Activated naive CD4-positive, alpha-beta T cell treated with anti-CD3 and anti-CD28 coated beads for 36 hours (primary cell): ENCODE measurements at regions of chr5 and their contacts with region 1.

Region 1: DNA sequence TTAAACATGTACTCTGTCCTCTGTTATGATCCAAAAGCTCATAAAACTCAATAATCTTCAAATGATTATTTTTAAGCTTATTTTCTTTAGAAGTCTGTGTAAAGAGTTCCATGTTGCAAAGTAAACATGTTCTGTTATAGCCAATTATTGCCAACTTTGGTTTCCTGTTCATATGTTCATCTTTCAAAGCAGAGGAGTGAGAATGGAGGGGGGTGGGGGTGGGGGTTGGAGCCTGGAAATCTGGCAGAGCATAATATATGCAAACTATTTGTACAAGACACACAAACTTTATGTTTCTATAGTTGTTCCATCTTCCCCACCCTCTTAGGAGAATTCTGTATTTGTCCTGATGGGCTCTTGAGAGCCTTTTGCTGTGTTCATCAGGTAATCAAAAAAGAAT is 135.0 kb downstream of the STARD4 start:
- DNase-seq: no peak
- H3K4me3 Mint-ChIP-seq: no peak overlapping the region
- H3K27ac Mint-ChIP-seq: no peak overlapping the region
- H3K4me1 Mint-ChIP-seq: peaks cover 39% of the 10 kb centered on the region
- H3K27me3 Mint-ChIP-seq: no peaks in the 10 kb centered on the region

Region 2: DNA sequence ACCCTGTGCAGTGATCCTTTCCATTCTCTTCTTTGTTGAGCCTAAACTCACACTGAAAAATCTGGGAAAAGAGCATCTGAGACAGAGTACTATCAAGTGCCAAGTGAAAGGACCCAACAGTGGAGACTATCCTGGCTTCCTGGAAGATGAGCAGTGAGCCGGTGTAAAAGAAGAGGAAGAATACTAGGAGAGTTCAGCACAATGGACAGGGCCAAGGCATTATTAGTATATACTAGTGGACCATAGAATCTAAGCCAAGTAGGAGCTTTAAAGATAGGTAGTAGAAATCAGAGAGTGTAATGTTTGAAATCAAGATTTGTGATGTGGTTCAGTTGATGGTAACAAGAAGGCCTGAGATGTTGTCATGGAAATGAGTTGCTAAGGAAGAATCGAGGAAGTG is 12.3 kb before region 1 on chr5:
- CTCF ChIA-PET with region 1: no interaction called
- intact Hi-C with region 1: no loop called
- DNase-seq: no peak
- H3K4me3 Mint-ChIP-seq: no peak overlapping the region
- H3K27ac Mint-ChIP-seq: no peak overlapping the region
- H3K4me1 Mint-ChIP-seq: peaks cover 42% of the 10 kb centered on the region
- H3K27me3 Mint-ChIP-seq: no peaks in the 10 kb centered on the region

Region 3: DNA sequence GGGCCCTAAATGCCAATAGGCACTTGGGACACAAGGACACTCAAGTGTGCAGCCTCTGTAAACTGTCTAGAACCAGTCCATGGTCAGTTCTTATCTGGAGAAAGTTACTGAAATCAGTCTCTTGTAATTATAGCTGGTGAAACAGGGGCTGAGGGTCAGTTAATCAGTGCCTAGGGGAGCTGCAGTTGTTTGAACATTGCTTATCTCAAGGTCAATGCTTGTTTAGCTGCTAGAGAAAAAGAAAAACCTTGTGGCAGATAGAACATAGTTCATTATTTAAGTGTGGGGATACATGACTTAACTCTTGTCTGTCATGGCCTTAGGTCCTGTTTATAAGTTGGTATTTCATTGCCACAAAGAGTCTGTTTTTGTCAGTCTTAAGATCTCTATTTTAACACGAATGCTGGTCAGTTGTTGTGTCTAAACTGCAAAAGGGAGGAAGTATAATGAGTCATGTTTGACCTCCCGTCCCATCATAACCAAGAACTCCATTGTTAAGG is 27.0 kb after region 1 on chr5:
- CTCF ChIA-PET with region 1: no interaction called
- intact Hi-C with region 1: loop called (anchors 2 kb)
- DNase-seq: no peak
- H3K4me3 Mint-ChIP-seq: no peak overlapping the region
- H3K27ac Mint-ChIP-seq: no peak overlapping the region
- H3K4me1 Mint-ChIP-seq: peaks cover 15% of the 10 kb centered on the region
- H3K27me3 Mint-ChIP-seq: no peaks in the 10 kb centered on the region